ENCODE measurements at regions of chr3 and their contacts with region 1.

Region 1: DNA sequence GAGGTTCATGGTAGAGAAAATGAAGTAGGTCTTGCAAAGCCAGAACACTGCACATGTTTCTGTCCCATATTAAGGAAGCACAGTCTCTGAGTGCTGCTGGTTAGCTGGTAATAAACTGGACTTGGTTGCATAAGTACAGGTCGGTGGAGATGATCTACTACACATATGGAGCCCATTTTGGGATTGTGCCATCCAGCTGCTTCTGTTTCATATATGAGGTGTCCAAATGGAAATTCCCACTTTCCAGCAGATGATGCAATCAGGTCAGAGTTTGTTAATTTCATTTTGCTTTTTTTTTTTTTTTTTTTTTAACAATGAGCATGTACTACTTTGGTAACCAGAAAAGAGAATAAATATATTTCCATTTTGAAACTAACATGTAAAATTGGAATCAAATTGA is 122.6 kb downstream of the SATB1 start:
- DNase-seq: no peak
- H3K4me3 Mint-ChIP-seq: no peak overlapping the region
- H3K27ac Mint-ChIP-seq: no peak overlapping the region
- H3K4me1 Mint-ChIP-seq: no peaks in the 10 kb centered on the region
- H3K27me3 Mint-ChIP-seq: no peaks in the 10 kb centered on the region
- CTCF ChIP-seq: no peak

Region 2: DNA sequence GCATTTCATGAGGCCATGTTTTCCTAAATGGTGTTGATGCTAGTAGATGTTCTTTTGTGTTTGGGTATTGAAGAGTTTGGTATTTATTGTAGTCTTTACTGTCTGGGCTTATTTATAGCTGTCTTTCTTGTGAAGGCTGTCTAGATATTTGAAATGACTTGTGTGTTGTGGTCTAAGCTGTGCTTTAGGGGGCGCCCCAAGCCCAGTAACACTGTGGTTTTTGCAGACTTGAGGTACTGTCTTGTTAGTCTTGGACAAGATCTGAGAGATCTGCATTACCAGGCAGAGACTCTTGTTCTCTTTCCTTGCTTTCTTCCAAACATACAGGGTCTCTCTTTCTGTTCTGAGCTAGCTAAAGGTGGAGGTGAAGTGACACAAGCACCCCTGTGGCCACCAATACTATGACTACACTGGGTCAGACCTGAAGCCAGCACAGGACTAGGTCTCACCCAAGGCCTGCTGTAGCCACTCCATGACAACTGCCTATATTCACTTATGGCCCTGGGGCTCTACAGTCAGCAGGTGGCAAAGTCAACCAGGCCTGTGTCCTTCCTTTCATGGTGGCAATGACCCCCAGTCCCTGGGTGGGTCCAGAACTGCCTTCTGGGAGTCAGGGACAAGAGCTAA is 408.0 kb before region 1 on chr3:
- CTCF ChIA-PET with region 1: no interaction called
- intact Hi-C with region 1: loop called (anchors 2 kb)
- DNase-seq: peak; percentile 70
- H3K4me3 Mint-ChIP-seq: no peak overlapping the region
- H3K27ac Mint-ChIP-seq: no peak overlapping the region
- H3K4me1 Mint-ChIP-seq: peaks cover 12% of the 10 kb centered on the region
- H3K27me3 Mint-ChIP-seq: no peaks in the 10 kb centered on the region
- CTCF ChIP-seq: peak; percentile 56

Region 3: GRCh38 chr3:18389108-18389733 is 86.7 kb after region 1 on chr3:
- CTCF ChIA-PET with region 1: interaction called, 11 read pairs
- intact Hi-C with region 1: no loop called
- DNase-seq: peak; percentile 38
- H3K4me3 Mint-ChIP-seq: no peak overlapping the region
- H3K27ac Mint-ChIP-seq: no peak overlapping the region
- H3K4me1 Mint-ChIP-seq: no peaks in the 10 kb centered on the region
- H3K27me3 Mint-ChIP-seq: no peaks in the 10 kb centered on the region
- CTCF ChIP-seq: peak; percentile 31

Measured in Calu3 (cell line).